HEK293 (cell line): ENCODE measurements at regions of chr2 and their contacts with region 1.

Region 1: DNA sequence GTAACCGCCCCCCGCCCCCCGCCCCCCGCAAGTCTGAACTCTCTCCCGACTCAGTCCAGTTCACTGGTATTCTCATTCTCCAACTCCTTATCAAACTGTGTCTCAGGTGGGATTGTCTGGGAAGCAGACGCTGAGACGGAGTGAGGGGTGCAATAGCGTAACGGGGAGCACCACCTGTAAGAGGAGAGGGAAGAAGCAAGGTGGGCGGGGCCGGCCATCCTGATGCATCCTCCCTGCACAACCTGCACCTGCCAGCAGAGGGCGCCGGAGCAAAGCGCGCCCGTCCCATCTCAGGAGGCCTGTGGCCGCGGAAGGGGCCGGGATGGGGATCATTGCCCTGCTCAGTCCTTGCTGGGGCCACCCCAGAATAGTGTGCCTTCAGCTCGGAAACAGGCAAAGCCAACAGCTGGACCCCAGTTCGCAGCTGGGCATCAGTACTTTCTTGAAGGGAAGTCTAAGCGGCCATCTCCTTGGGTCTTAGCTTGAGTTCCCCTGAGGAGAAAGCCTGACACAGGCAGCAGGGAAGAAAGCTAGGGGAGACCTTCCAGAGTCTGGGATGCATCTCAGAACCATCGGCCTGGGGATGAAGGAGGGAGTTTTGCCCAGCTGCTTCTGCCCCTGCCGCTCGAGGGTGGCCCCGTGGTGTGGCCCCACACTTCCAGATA is 208.0 kb downstream of the TFCP2L1 start:
- H3K4me3 ChIP-seq: no peak overlapping the region
- H3K27ac ChIP-seq: no peak overlapping the region
- H3K4me1 ChIP-seq: peaks cover 8% of the 10 kb centered on the region; the same call in 1 of the 2 replicates
- CTCF ChIP-seq: peak; percentile 89

Region 2: GRCh38 chr2:120680136-120680761 is 396.8 kb before region 1 on chr2:
- CTCF ChIA-PET with region 1: interaction called, 16 read pairs
- POLR2A ChIA-PET with region 1: interaction called, 5 read pairs
- H3K4me3 ChIP-seq: no peak overlapping the region
- H3K27ac ChIP-seq: no peak overlapping the region
- H3K4me1 ChIP-seq: no peaks in the 10 kb centered on the region
- CTCF ChIP-seq: peak; percentile 87

Region 3: GRCh38 chr2:120693121-120693520 is 383.9 kb before region 1 on chr2:
- CTCF ChIA-PET with region 1: interaction called, 172 read pairs
- POLR2A ChIA-PET with region 1: interaction called, 9 read pairs
- H3K4me3 ChIP-seq: no peak overlapping the region
- H3K27ac ChIP-seq: no peak overlapping the region
- H3K4me1 ChIP-seq: no peaks in the 10 kb centered on the region
- CTCF ChIP-seq: no peak

Region 4: GRCh38 chr2:120703330-120703994 is 373.6 kb before region 1 on chr2:
- CTCF ChIA-PET with region 1: interaction called, 28 read pairs
- POLR2A ChIA-PET with region 1: interaction called, 5 read pairs
- H3K4me3 ChIP-seq: no peak overlapping the region
- H3K27ac ChIP-seq: no peak overlapping the region
- H3K4me1 ChIP-seq: peaks cover 3% of the 10 kb centered on the region; the same call in 1 of the 2 replicates
- CTCF ChIP-seq: no peak

Region 5: GRCh38 chr2:120735746-120736170 is 341.3 kb before region 1 on chr2 and contains the start of gene GLI2:
- CTCF ChIA-PET with region 1: interaction called, 4 read pairs
- POLR2A ChIA-PET with region 1: interaction called, 10 read pairs
- H3K4me3 ChIP-seq: peak within 1 kb of the TSS; percentile 69
- H3K27ac ChIP-seq: peak within 1 kb of the TSS; percentile 93
- H3K4me1 ChIP-seq: peaks cover 27% of the 10 kb centered on the region
- CTCF ChIP-seq: peak; percentile 70

Region 6: DNA sequence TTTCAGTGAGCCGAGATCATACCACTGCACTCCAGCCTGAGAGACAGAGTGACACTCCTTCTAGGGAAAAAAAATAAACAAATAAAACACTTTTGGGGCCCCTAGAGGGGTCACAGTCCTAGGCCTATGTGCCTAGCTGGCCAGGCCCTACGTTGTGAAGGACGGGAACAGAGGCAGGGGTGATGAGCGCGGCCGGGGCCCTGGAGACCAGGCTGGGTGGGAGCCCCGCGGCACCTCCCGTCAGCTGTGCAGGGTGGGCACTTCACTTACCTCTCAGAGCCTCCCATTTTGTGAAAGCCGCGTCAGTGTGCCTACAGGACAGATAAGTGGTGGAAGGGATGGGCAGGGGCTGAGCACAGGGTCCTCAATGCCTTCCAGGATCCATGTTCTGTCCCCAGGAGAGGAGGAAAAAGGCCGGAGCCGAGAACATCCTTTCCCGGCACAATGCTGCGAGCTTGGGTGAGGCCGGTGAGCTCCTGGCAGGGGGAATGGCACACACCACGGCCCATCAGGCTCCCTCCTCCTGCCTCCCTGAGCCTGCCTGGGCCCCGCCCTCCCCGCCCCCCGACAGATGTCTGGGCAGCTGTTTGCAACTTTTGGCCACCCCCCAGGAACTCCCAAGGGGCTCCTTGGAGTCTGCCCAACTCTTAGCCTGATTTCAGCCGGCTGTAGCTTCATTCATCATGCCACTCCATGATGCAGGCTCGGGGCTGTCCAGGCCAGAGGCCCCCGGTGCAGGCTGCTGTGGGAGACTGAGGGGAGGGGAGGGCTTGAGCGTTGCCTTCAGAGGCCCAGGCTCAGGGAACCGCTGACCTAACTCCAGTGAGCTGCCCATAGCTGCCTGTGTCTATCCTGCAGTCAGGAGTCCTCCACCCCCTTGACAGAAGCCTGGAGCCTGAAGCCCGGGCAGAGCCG is 11.5 kb after region 1 on chr2:
- CTCF ChIA-PET with region 1: interaction called, 22 read pairs
- POLR2A ChIA-PET with region 1: interaction called, 6 read pairs
- H3K4me3 ChIP-seq: no peak overlapping the region
- H3K27ac ChIP-seq: no peak overlapping the region
- H3K4me1 ChIP-seq: no peaks in the 10 kb centered on the region
- CTCF ChIP-seq: no peak

Region 7: DNA sequence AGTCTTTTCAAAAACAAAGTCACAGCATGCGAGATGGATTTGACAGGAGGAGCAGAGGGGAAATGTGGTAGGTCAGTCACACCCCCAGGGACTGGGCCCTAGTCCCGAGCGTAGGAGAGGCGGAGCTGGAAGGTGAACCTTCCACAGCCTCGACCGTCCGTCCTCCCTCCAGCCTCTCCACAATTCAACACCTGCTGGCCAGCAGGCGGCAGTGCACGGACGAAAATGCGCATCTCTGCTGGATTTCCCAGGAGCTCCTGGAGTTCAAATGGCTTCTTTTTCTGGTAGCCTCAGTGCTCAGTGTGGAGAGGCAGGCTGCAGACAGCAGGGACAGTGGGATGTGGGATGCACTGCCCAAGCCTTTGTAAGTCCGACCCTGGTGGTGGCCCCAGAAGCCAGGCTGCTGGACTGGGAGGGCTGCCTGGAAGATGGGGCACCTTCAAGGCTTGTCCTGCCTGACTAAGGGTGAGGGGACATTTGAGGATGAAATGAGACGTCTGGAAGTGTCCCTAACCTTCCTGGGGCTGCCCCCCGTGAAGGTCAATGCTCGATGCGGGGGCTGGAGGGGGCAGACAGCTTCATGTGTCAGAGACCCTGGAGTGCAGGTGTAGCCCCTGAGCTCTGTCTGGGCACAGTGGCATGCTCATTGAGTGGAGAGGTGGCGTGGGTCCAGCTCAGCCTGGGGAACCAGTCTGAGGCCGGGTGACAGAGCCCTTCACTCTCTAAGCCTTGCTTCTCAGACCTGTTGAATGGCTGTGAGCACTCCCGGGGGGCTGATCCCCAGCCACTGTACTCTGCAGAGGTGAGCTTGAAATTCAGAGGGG is 18.5 kb after region 1 on chr2:
- CTCF ChIA-PET with region 1: interaction called, 15 read pairs
- POLR2A ChIA-PET with region 1: interaction called, 3 read pairs
- H3K4me3 ChIP-seq: no peak overlapping the region
- H3K27ac ChIP-seq: no peak overlapping the region
- H3K4me1 ChIP-seq: no peaks in the 10 kb centered on the region
- CTCF ChIP-seq: peak; percentile 86